Naive thymus-derived CD8-positive, alpha-beta T cell (primary cell): ENCODE measurements at regions of chr11 and their contacts with region 1.

Region 1: GRCh38 chr11:57800444-57801182 is 39.0 kb downstream of the CTNND1 start:
- DNase-seq: peak in 5 of 10 donors; percentile 16 to 72 (median 67)
- ATAC-seq: peak; percentile 84 to 92
- H3K4me3 Mint-ChIP-seq: peak overlapping the region in 8 of 10 donors; percentile 0 to 56 (median 24)
- H3K27ac Mint-ChIP-seq: peak overlapping the region; percentile 64 to 93 (median 80)
- H3K4me1 Mint-ChIP-seq: peaks cover 8 to 32% (median 29%) of the 10 kb centered on the region in 4 donors
- H3K27me3 Mint-ChIP-seq: no peaks in the 10 kb centered on the region

Region 2: GRCh38 chr11:57712256-57713150 is 88.1 kb before region 1 on chr11 and contains the start of gene TMX2:
- POLR2A ChIA-PET with region 1: interaction called, 12 read pairs
- DNase-seq: peak; percentile 79 to 95 (median 88)
- ATAC-seq: peak; percentile 93
- H3K4me3 Mint-ChIP-seq: peak within 1 kb of the TSS; percentile 87 to 99 (median 96)
- H3K27ac Mint-ChIP-seq: peak within 1 kb of the TSS; percentile 92 to 99 (median 97)
- H3K4me1 Mint-ChIP-seq: peaks cover 24 to 54% (median 49%) of the 10 kb centered on the region in 4 donors
- H3K27me3 Mint-ChIP-seq: no peaks in the 10 kb centered on the region
- polyA plus RNA-seq, gene TMX2: 69.9 to 85.8 (median 82.7) TPM

Region 3: DNA sequence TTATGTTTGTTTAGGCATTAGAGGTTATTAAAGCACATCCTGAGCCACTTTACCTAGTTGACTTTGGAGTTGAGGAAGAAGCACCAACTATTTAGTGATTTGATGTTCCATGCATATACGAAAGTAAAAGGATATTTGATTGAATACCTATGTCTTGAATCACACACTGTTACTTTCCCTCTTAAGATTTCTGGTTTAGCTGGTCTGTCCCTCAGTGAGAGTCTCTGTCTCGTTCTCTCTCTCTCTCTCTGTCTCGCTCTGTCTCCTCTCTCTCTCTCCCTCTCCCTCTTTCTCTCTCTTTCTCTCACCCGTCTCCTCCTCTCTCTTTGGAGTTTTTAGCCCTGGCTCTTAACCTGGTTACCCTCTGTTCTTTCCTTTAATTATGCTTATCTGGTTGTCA is 28.1 kb before region 1 on chr11:
- POLR2A ChIA-PET with region 1: no interaction called
- DNase-seq: no peak
- ATAC-seq: no peak
- H3K4me3 Mint-ChIP-seq: no peak overlapping the region
- H3K27ac Mint-ChIP-seq: peak overlapping the region in 1 of 10 donors; percentile 9
- H3K4me1 Mint-ChIP-seq: peaks cover 1 to 32% (median 13%) of the 10 kb centered on the region in 4 donors
- H3K27me3 Mint-ChIP-seq: no peaks in the 10 kb centered on the region

Region 4: DNA sequence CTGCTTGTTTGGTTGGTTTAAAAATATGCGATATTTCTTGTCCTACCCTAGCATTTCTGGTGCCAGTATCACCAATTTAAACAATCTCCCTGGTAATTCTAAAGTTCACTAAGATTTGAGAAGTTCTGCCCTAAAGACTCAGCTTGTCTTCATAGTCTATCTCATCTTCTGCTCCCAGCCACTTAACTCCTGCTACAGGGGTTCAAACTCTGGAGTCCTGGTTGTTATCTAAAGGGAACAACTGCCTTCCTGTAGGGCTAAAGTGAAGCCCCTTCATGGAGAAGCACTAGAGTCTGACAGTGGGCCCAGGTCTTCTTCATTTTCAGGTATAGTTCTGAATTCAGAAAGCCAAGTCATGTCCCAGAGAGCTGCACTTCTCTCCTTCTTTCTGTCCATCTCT is 34.2 kb after region 1 on chr11:
- POLR2A ChIA-PET with region 1: no interaction called
- DNase-seq: no peak
- ATAC-seq: no peak
- H3K4me3 Mint-ChIP-seq: no peak overlapping the region
- H3K27ac Mint-ChIP-seq: no peak overlapping the region
- H3K4me1 Mint-ChIP-seq: peaks cover 0 to 3% (median 0%) of the 10 kb centered on the region in 4 donors
- H3K27me3 Mint-ChIP-seq: peaks cover 23 to 54% (median 33%) of the 10 kb centered on the region in 5 donors